H1 (cell line): ENCODE measurements at regions of chr12 and their contacts with region 1.

Region 1: GRCh38 chr12:94074980-94075928 is 73.1 kb upstream of the PLXNC1 start:
- DNase-seq: no peak
- H3K4me3 ChIP-seq: no peak overlapping the region
- H3K27ac ChIP-seq: no peak overlapping the region
- H3K4me1 ChIP-seq: peaks cover 0 to 3% (median 0%) of the 10 kb centered on the region in 4 experiments; a peak in 1 of 7 replicates
- H3K27me3 ChIP-seq: no peaks in the 10 kb centered on the region
- CTCF ChIP-seq: peak; percentile 51 to 72 (median 64)
- EP300 ChIP-seq: no peak
- POLR2A ChIP-seq: no peak
- RAD21 ChIP-seq: peak; percentile 82 to 83

Region 2: DNA sequence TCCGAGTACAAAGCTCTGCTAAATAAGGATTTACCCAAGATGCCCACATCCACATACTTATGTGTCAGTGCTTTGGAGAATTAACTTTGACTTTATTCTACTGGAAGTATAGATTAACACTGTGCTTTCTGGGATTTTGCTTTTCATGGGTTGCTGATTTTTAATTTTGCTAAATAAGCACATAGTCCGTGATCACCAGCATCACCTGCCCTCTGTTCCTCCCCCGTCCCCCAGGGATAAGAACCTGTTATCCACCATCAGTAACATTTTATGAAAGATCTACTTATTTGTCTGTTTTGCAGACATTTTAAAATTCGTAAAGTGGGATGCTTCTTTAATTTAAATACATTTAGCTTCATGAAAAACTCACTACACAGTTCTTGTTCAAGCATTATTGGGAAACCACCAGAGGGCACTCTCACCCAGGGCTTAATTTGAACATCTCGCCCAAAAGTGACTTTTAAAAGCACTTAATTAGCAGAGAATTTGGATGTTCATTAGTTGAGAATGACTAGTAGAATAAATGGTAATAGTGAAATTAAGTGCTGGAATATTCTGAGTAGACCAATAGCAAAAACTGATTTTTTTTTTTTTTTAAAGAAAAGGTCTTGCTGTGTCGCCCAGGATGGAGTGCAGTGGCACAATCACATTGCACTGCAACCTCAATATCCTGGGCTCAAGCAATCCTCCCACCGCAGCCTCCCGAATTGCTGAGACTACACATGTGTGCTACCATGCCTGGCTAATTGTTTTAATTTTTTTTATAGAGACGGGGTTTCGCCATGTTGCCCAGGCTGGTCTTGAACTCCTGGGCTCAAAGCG is 572.2 kb before region 1 on chr12:
- CTCF ChIA-PET with region 1: interaction called, 17 read pairs
- POLR2A ChIA-PET with region 1: no interaction called
- DNase-seq: peak; percentile 9 to 61
- H3K4me3 ChIP-seq: no peak overlapping the region
- H3K27ac ChIP-seq: no peak overlapping the region
- H3K4me1 ChIP-seq: no peaks in the 10 kb centered on the region
- H3K27me3 ChIP-seq: no peaks in the 10 kb centered on the region
- CTCF ChIP-seq: peak in 2 of 3 experiments; percentile 55 to 57; a peak in 3 of 4 replicates
- EP300 ChIP-seq: no peak
- POLR2A ChIP-seq: no peak
- RAD21 ChIP-seq: peak; percentile 78 to 80

Region 3: GRCh38 chr12:93766796-93767523 is 308.3 kb before region 1 on chr12:
- CTCF ChIA-PET with region 1: interaction called, 22 read pairs
- POLR2A ChIA-PET with region 1: no interaction called
- DNase-seq: no peak
- H3K4me3 ChIP-seq: no peak overlapping the region
- H3K27ac ChIP-seq: no peak overlapping the region
- H3K4me1 ChIP-seq: no peaks in the 10 kb centered on the region; a peak in 3 of 7 replicates
- H3K27me3 ChIP-seq: no peaks in the 10 kb centered on the region
- CTCF ChIP-seq: peak in 2 of 3 experiments; percentile 49 to 50; a peak in 2 of 4 replicates
- EP300 ChIP-seq: no peak
- POLR2A ChIP-seq: no peak
- RAD21 ChIP-seq: peak; percentile 69 to 80

Region 4: GRCh38 chr12:93990832-93991803 is 84.1 kb before region 1 on chr12:
- CTCF ChIA-PET with region 1: interaction called, 20 read pairs
- POLR2A ChIA-PET with region 1: no interaction called
- DNase-seq: peak; percentile 31 to 60
- H3K4me3 ChIP-seq: no peak overlapping the region
- H3K27ac ChIP-seq: no peak overlapping the region
- H3K4me1 ChIP-seq: peaks cover 0 to 4% (median 2%) of the 10 kb centered on the region in 4 experiments; a peak in 5 of 7 replicates
- H3K27me3 ChIP-seq: no peaks in the 10 kb centered on the region
- CTCF ChIP-seq: peak; percentile 52 to 74 (median 63)
- EP300 ChIP-seq: no peak
- POLR2A ChIP-seq: no peak
- RAD21 ChIP-seq: peak; percentile 67 to 71

Region 5: GRCh38 chr12:94053676-94054075 is 21.6 kb before region 1 on chr12:
- CTCF ChIA-PET with region 1: interaction called, 10 read pairs
- POLR2A ChIA-PET with region 1: no interaction called
- DNase-seq: no peak
- H3K4me3 ChIP-seq: no peak overlapping the region
- H3K27ac ChIP-seq: no peak overlapping the region
- H3K4me1 ChIP-seq: peaks cover 0 to 3% (median 0%) of the 10 kb centered on the region in 4 experiments; a peak in 2 of 7 replicates
- H3K27me3 ChIP-seq: no peaks in the 10 kb centered on the region
- CTCF ChIP-seq: no peak
- EP300 ChIP-seq: no peak
- POLR2A ChIP-seq: no peak
- RAD21 ChIP-seq: no peak

Region 6: GRCh38 chr12:94109160-94109559 is 33.9 kb after region 1 on chr12:
- CTCF ChIA-PET with region 1: no interaction called
- POLR2A ChIA-PET with region 1: no interaction called
- DNase-seq: no peak
- H3K4me3 ChIP-seq: no peak overlapping the region
- H3K27ac ChIP-seq: no peak overlapping the region
- H3K4me1 ChIP-seq: 0 out of 7 replicates have a peak, but pooled peaks cover 0 to 3% (median 0%) of the 10 kb centered on the region in 4 experiments
- H3K27me3 ChIP-seq: no peaks in the 10 kb centered on the region
- CTCF ChIP-seq: no peak
- EP300 ChIP-seq: no peak
- POLR2A ChIP-seq: no peak
- RAD21 ChIP-seq: no peak